Caco-2 (cell line): ENCODE measurements at regions of chr11 and their contacts with region 1.

Region 1: DNA sequence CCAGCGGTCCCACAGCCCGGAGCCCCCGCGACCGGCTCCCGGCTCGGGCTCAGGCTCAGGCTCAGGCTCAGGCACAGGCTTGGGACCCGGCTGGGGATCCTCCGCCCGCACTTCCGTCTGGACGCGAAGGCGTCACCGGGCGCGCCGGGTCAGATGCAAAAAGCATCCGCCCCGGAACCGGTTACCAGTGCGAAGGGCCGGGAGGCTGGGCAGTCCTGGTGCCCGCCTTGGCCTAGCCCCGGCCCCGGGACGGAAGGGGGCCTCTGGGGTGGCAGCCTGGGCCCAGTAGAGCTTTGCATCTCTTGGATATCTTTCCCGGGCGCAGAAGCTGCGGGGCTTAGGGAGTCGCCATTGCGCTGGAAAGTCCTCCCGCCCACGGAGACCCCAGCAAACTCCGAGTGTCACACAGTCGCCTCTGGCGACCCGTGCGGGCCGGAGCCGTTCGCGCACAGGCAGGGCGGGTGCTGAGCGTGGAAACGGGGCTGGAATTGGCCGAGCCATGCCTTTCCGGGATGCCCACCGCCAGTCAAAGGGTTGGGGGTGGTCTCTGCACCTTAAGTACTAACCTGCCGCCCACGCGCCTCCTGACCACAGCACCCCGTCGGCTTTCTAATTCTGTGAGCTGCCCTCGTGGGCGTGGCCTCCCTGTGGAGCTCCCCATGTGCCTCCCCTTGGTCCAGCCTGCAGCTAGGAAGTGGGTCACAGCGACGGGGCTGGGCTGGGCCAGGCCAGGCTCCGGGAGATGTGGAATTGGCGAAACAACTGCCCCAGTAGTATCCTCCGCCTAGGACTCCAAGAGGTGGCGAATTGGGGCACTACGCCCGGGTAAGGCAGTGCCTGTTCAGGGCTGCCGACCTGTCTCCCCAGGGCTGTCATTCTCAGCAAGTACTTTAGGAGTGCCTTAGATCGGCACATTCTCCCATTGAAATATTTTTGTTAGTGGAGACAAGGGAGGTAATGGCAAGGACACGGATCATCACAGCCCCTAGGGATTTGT is at the start of gene TMEM9B:
- DNase-seq: peak; percentile 88 to 92
- H3K4me3 ChIP-seq: peak within 1 kb of the TSS; percentile 95
- H3K4me3 Mint-ChIP-seq: peak within 1 kb of the TSS; percentile 84
- H3K27ac Mint-ChIP-seq: peak within 1 kb of the TSS; percentile 48
- H3K4me1 ChIP-seq: no peaks in the 10 kb centered on the region
- H3K4me1 Mint-ChIP-seq: peaks cover 6% of the 10 kb centered on the region
- H3K27me3 ChIP-seq: no peaks in the 10 kb centered on the region
- H3K27me3 Mint-ChIP-seq: no peaks in the 10 kb centered on the region
- CTCF ChIP-seq: no peak
- total RNA-seq, gene TMEM9B: 26.0 and 29.6 TPM in 2 replicates

Region 2: DNA sequence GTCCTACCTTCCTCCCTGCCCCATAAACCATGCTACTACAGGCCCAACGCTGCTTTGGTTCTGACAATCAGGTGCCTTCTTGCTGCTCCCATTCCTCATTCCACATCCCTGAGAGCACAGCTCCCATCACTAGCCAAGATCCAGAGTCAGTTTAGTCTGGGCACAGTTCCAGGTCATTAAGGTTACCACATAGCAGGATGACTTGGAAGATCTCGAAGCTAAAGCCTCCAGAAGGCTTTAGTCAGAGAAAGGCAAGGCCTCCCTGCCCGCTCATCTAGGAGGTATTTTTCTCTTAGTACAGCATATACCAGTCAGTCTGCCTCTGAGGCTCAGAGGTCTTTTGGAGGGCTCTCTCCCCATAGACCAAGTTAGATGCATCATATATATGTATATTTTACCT is 312.5 kb before region 1 on chr11:
- CTCF ChIA-PET with region 1: no interaction called
- POLR2A ChIA-PET with region 1: no interaction called
- intact Hi-C with region 1: no loop called
- DNase-seq: no peak
- H3K4me3 ChIP-seq: no peak overlapping the region
- H3K4me3 Mint-ChIP-seq: no peak overlapping the region
- H3K27ac Mint-ChIP-seq: no peak overlapping the region
- H3K4me1 ChIP-seq: no peaks in the 10 kb centered on the region
- H3K4me1 Mint-ChIP-seq: peaks cover 5% of the 10 kb centered on the region
- H3K27me3 ChIP-seq: no peaks in the 10 kb centered on the region
- H3K27me3 Mint-ChIP-seq: no peaks in the 10 kb centered on the region
- CTCF ChIP-seq: no peak

Region 3: DNA sequence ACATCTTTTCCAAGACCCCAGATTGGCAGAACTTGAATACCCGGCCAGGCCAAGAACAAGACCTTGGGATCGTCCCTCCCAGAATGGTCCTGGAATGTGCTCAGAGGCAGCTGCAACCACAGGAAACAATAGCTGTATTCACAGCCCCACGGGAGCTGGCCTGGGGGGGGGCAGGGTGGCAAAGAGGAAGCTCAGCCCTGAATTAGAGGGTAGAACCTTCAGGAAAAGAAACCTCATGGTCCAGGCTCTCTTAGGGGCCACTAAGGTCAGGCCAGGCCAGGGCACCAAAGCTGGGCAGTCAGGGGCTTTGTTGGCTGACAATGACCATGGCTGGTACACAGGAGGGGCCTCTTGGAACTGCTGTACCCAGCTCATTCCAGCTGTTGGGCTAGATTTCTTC is 264.7 kb before region 1 on chr11:
- CTCF ChIA-PET with region 1: interaction called, 11 read pairs
- POLR2A ChIA-PET with region 1: no interaction called
- intact Hi-C with region 1: no loop called
- DNase-seq: no peak
- H3K4me3 ChIP-seq: no peak overlapping the region
- H3K4me3 Mint-ChIP-seq: no peak overlapping the region
- H3K27ac Mint-ChIP-seq: peak overlapping the region; percentile 69
- H3K4me1 ChIP-seq: peaks cover 21% of the 10 kb centered on the region
- H3K4me1 Mint-ChIP-seq: peaks cover 22% of the 10 kb centered on the region
- H3K27me3 ChIP-seq: no peaks in the 10 kb centered on the region
- H3K27me3 Mint-ChIP-seq: no peaks in the 10 kb centered on the region
- CTCF ChIP-seq: no peak

Region 4: DNA sequence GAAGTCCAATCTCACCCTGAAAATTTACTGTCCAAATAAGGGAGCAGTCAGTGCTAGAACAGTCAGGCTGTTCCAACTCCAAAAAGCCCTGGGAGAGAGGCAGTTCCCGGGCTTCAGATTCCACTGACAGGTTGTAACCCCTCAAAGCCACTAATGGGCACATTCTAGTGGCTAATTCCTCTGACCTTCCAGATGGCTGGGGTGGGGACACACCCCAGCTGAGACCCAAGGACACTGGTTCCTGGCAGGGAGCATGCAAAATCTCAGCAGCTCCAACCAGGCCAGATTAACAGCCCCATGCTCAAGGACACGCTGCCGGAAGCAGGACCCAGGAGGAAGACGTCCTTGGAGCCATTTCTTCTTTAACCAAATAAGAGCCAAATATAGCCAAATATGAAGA is 189.3 kb before region 1 on chr11:
- CTCF ChIA-PET with region 1: no interaction called
- POLR2A ChIA-PET with region 1: no interaction called
- intact Hi-C with region 1: loop called (anchors 2 kb)
- DNase-seq: peak in 1 of 2 experiments; percentile 32
- H3K4me3 ChIP-seq: no peak overlapping the region
- H3K4me3 Mint-ChIP-seq: no peak overlapping the region
- H3K27ac Mint-ChIP-seq: peak overlapping the region; percentile 67
- H3K4me1 ChIP-seq: peaks cover 25% of the 10 kb centered on the region
- H3K4me1 Mint-ChIP-seq: peaks cover 23% of the 10 kb centered on the region
- H3K27me3 ChIP-seq: no peaks in the 10 kb centered on the region
- H3K27me3 Mint-ChIP-seq: no peaks in the 10 kb centered on the region
- CTCF ChIP-seq: no peak

Region 5: GRCh38 chr11:8911029-8911826 is 53.4 kb before region 1 on chr11 and contains the start of gene AKIP1:
- CTCF ChIA-PET with region 1: interaction called, 42 read pairs
- POLR2A ChIA-PET with region 1: interaction called, 3 read pairs
- intact Hi-C with region 1: loop called (anchors 1 kb)
- DNase-seq: peak; percentile 94 to 95
- H3K4me3 ChIP-seq: peak within 1 kb of the TSS; percentile 64
- H3K4me3 Mint-ChIP-seq: peak within 1 kb of the TSS; percentile 75
- H3K27ac Mint-ChIP-seq: peak within 1 kb of the TSS; percentile 18
- H3K4me1 ChIP-seq: no peaks in the 10 kb centered on the region
- H3K4me1 Mint-ChIP-seq: peaks cover 8% of the 10 kb centered on the region
- H3K27me3 ChIP-seq: no peaks in the 10 kb centered on the region
- H3K27me3 Mint-ChIP-seq: peaks cover 7% of the 10 kb centered on the region
- CTCF ChIP-seq: no peak
- total RNA-seq, gene AKIP1: 28.7 and 32.6 TPM in 2 replicates

Region 6: GRCh38 chr11:9137293-9138132 is 172.9 kb after region 1 on chr11:
- CTCF ChIA-PET with region 1: interaction called, 23 read pairs
- POLR2A ChIA-PET with region 1: interaction called, 3 read pairs
- intact Hi-C with region 1: loop called (anchors 1 kb)
- DNase-seq: peak; percentile 77 to 85
- H3K4me3 ChIP-seq: no peak overlapping the region
- H3K4me3 Mint-ChIP-seq: no peak overlapping the region
- H3K27ac Mint-ChIP-seq: peak overlapping the region; percentile 62
- H3K4me1 ChIP-seq: no peaks in the 10 kb centered on the region
- H3K4me1 Mint-ChIP-seq: no peaks in the 10 kb centered on the region
- H3K27me3 ChIP-seq: no peaks in the 10 kb centered on the region
- H3K27me3 Mint-ChIP-seq: no peaks in the 10 kb centered on the region
- CTCF ChIP-seq: peak; percentile 95 to 99